HCT116 (cell line): ENCODE measurements at regions of chr4 and their contacts with region 1.

Region 1: GRCh38 chr4:119212234-119212963 is at the start of gene USP53:
- DNase-seq: peak; percentile 98
- ATAC-seq: peak; percentile 88
- H3K4me3 ChIP-seq: peak within 1 kb of the TSS; percentile 67 to 81
- H3K27ac ChIP-seq: peak within 1 kb of the TSS; percentile 87
- H3K4me1 ChIP-seq: peaks cover 11 to 35% of the 10 kb centered on the region in 2 experiments
- H3K27me3 ChIP-seq: no peaks in the 10 kb centered on the region
- CTCF ChIP-seq: no peak
- POLR2A ChIP-seq: peak; percentile 98
- RAD21 ChIP-seq: no peak
- total RNA-seq, gene USP53: 22.0 TPM

Region 2: DNA sequence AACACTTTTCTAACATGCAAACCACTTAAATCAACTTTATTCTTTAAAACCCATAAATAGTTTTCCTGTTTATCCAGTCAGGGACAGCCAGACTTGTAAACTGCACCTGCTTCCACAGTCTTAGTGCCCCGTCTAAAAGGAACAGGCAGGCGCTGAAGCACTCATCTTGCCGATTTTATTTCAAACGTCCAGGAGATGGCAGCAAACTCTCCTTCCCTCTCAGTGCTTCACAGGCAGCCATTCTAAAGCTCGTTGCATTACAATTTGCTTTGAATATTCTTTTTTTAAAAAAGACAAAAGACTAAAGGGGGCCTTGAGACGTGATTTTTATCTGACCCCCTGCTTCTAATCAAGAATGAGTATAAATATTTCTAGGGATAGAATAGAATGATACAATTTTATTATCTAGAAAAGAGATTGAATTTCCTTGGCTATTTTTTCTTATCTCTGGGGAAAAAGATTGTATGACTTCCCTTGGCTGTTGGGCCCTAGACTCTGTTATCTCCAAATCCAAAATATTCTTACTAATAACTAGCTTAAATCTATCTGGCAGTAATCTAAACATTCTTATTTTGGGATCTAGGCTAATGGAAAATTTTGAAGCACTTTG is 170.3 kb before region 1 on chr4:
- CTCF ChIA-PET with region 1: interaction called, 11 read pairs
- POLR2A ChIA-PET with region 1: interaction called, 11 read pairs
- RAD21 ChIA-PET with region 1: no interaction called
- intact Hi-C with region 1: loop called (anchors 2 kb)
- DNase-seq: peak; percentile 67
- ATAC-seq: peak; percentile 95
- H3K4me3 ChIP-seq: no peak overlapping the region
- H3K27ac ChIP-seq: no peak overlapping the region
- H3K4me1 ChIP-seq: no peaks in the 10 kb centered on the region
- H3K27me3 ChIP-seq: no peaks in the 10 kb centered on the region
- CTCF ChIP-seq: peak; percentile 61 to 80 (median 72)
- POLR2A ChIP-seq: no peak
- RAD21 ChIP-seq: peak; percentile 88

Region 3: DNA sequence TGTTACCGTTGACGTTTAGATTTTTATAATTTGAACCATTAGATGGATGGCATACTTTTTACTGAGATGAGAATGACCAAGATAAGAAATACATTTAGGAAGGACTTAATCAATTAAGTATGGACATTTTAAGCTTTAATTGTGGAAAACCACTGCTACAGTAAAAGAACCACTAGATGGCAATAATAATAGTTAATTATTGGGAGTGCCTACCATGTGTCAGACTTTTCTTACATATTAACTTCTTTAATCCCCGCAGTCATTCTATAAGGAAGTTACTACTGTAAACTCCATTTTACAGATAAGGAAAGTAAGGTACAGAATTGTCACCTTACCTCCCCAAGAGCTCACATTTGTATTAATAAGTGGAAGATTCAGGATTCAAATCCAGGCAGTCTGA is 125.3 kb before region 1 on chr4:
- CTCF ChIA-PET with region 1: interaction called, 10 read pairs
- POLR2A ChIA-PET with region 1: interaction called, 6 read pairs
- RAD21 ChIA-PET with region 1: no interaction called
- intact Hi-C with region 1: no loop called
- DNase-seq: no peak
- ATAC-seq: no peak
- H3K4me3 ChIP-seq: no peak overlapping the region
- H3K27ac ChIP-seq: no peak overlapping the region
- H3K4me1 ChIP-seq: no peaks in the 10 kb centered on the region
- H3K27me3 ChIP-seq: no peaks in the 10 kb centered on the region
- CTCF ChIP-seq: peak; percentile 13 to 38 (median 19); a peak in 3 of 6 replicates
- POLR2A ChIP-seq: no peak
- RAD21 ChIP-seq: peak; percentile 57

Region 4: GRCh38 chr4:119103263-119103662 is 109.1 kb before region 1 on chr4:
- CTCF ChIA-PET with region 1: no interaction called
- POLR2A ChIA-PET with region 1: interaction called, 22 read pairs
- RAD21 ChIA-PET with region 1: interaction called in 1 of 2 experiments, 3 read pairs
- intact Hi-C with region 1: loop called (anchors 5 kb)
- DNase-seq: peak; percentile 85
- ATAC-seq: peak; percentile 79
- H3K4me3 ChIP-seq: 0 out of 4 replicates have a peak overlapping the region, but pooled peaks of 1 of the 2 experiments have one; percentile 18
- H3K27ac ChIP-seq: no peak overlapping the region
- H3K4me1 ChIP-seq: peaks cover 3 to 23% of the 10 kb centered on the region in 2 experiments; a peak in 3 of 4 replicates
- H3K27me3 ChIP-seq: no peaks in the 10 kb centered on the region
- CTCF ChIP-seq: no peak
- POLR2A ChIP-seq: no peak
- RAD21 ChIP-seq: peak; percentile 24; the same call in 1 of the 2 replicates

Region 5: DNA sequence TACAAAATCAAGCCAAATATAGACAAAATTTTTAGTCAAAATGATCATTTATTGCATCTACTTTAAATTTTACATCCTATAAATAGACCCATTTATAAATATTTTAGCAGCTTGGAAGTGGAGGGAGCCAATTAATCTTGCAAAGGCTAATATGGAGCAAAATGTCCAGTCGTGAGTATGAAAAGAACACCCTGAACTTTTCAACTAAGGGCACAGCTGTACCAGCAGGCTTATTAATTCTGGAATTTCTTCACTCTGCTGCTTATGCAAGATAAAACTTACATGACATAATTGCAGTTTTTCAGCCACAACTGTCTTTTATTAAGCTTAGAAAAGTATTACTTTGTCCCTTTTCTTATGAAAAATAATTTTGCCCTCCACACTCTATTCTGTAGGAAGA is 22.8 kb before region 1 on chr4:
- CTCF ChIA-PET with region 1: no interaction called
- POLR2A ChIA-PET with region 1: interaction called, 11 read pairs
- RAD21 ChIA-PET with region 1: no interaction called
- intact Hi-C with region 1: no loop called
- DNase-seq: no peak
- ATAC-seq: no peak
- H3K4me3 ChIP-seq: no peak overlapping the region
- H3K27ac ChIP-seq: no peak overlapping the region
- H3K4me1 ChIP-seq: peaks cover 4 to 8% of the 10 kb centered on the region in 2 experiments; a peak in 2 of 4 replicates
- H3K27me3 ChIP-seq: no peaks in the 10 kb centered on the region
- CTCF ChIP-seq: no peak
- POLR2A ChIP-seq: no peak
- RAD21 ChIP-seq: no peak